Motor neuron (in vitro differentiated cells): ENCODE measurements at regions of chr17 and their contacts with region 1.

Region 1: GRCh38 chr17:18025945-18026776 is 12.8 kb downstream of the ATPAF2 start:
- ATAC-seq: peak in 4 of 8 experiments; percentile 34 to 93 (median 65)
- H3K4me3 ChIP-seq: no peak overlapping the region
- H3K27ac ChIP-seq: no peak overlapping the region
- H3K4me1 ChIP-seq: peaks cover 13 to 24% of the 10 kb centered on the region in 2 donors

Region 2: GRCh38 chr17:17675925-17676534 is 350.1 kb before region 1 on chr17:
- in situ Hi-C with region 1: loop called in 6 of 9 experiments (anchors 10 to 25 kb)
- ATAC-seq: peak in 7 of 8 experiments; percentile 22 to 57 (median 50)
- H3K4me3 ChIP-seq: no peak overlapping the region
- H3K27ac ChIP-seq: peak overlapping the region in 1 of 2 donors; percentile 26
- H3K4me1 ChIP-seq: peaks cover 8 to 13% of the 10 kb centered on the region in 2 donors

Region 3: DNA sequence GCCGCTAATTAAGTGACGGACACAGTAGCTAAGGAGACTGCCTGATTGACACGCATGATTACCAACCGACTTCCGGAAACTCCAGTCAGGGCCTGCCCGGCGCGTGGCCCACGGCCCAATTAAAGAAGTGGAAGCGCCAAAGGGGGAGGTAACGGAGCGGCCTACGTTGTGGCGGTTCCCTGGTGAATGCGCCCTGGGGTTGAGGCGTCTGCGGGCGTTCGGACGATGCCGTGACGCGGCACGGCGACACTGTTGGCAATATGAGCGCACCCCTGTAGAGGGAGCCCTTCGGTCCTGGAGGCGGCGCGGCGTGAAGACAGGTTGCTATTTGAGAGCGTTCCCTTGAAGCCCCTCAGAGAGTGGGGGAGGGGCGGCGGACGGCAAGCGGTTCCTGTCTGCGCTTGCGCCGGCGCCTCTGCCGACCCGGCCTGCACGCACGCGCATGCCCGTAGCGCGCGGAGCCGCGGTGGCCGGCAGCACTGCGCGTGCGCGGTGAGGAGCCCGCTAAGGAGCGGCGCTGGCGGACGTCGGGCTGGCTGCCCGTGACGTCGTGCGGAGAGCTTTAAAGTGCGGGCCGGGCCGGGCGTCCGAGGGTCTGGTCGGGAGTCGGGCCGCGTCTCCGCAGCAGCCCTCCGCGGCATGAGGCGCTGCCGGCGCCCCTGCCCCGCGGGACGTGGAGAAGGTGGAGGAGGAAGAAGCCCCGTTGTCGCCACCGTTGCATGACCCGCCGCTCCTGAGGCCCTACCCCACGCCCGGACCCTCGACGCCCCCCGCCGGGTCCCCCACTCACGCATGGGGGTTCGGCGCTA is 157.4 kb after region 1 on chr17 and contains the start of gene ALKBH5:
- in situ Hi-C with region 1: no loop called
- ATAC-seq: peak; percentile 83 to 92 (median 87)
- H3K4me3 ChIP-seq: peak within 1 kb of the TSS; percentile 48 to 73 (median 64)
- H3K27ac ChIP-seq: peak within 1 kb of the TSS; percentile 97 to 98
- H3K4me1 ChIP-seq: peaks cover 27 to 32% of the 10 kb centered on the region in 2 donors
- total RNA-seq, gene ALKBH5: 60.4 to 140 (median 79.8) TPM